Caco-2 (cell line): ENCODE measurements at regions of chr7 and their contacts with region 1.

Region 1: GRCh38 chr7:83936056-83936708 is 258.4 kb downstream of the SEMA3A start:
- DNase-seq: peak; percentile 68 to 76
- H3K4me3 ChIP-seq: no peak overlapping the region
- H3K4me3 Mint-ChIP-seq: no peak overlapping the region
- H3K27ac Mint-ChIP-seq: no peak overlapping the region
- H3K4me1 ChIP-seq: 0 out of 2 replicates have a peak, but pooled peaks cover 4% of the 10 kb centered on the region
- H3K4me1 Mint-ChIP-seq: peaks cover 10% of the 10 kb centered on the region
- H3K27me3 ChIP-seq: no peaks in the 10 kb centered on the region
- H3K27me3 Mint-ChIP-seq: no peaks in the 10 kb centered on the region
- CTCF ChIP-seq: peak; percentile 85 to 94

Region 2: DNA sequence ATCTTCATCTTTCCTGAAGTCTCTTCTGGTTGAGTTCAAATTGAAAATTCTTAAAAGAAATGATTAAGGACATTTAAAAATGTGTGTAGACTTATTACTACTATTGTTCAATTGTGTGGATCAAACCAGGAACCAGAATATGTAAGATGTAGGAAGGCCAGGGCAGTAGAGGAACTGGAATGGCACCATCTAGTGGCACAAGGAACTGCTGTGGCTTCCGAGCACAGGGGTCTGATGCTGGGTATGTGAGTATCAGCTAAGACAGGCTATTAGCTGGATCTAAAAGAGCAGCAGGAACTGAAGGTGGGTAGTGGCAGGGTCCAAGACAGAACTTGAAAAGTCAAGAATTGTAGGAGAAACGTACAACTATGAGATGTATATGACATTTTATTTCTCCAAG is 11.1 kb after region 1 on chr7:
- CTCF ChIA-PET with region 1: no interaction called
- POLR2A ChIA-PET with region 1: no interaction called
- intact Hi-C with region 1: loop called (anchors 1 kb)
- DNase-seq: peak; percentile 46 to 57
- H3K4me3 ChIP-seq: no peak overlapping the region
- H3K4me3 Mint-ChIP-seq: no peak overlapping the region
- H3K27ac Mint-ChIP-seq: no peak overlapping the region
- H3K4me1 ChIP-seq: 0 out of 2 replicates have a peak, but pooled peaks cover 3% of the 10 kb centered on the region
- H3K4me1 Mint-ChIP-seq: no peaks in the 10 kb centered on the region
- H3K27me3 ChIP-seq: no peaks in the 10 kb centered on the region
- H3K27me3 Mint-ChIP-seq: no peaks in the 10 kb centered on the region
- CTCF ChIP-seq: peak in 1 of 2 experiments; percentile 63

Region 3: GRCh38 chr7:83964318-83964717 is 28.1 kb after region 1 on chr7:
- CTCF ChIA-PET with region 1: no interaction called
- POLR2A ChIA-PET with region 1: no interaction called
- intact Hi-C with region 1: no loop called
- DNase-seq: no peak
- H3K4me3 ChIP-seq: no peak overlapping the region
- H3K4me3 Mint-ChIP-seq: no peak overlapping the region
- H3K27ac Mint-ChIP-seq: no peak overlapping the region
- H3K4me1 ChIP-seq: no peaks in the 10 kb centered on the region
- H3K4me1 Mint-ChIP-seq: no peaks in the 10 kb centered on the region
- H3K27me3 ChIP-seq: no peaks in the 10 kb centered on the region
- H3K27me3 Mint-ChIP-seq: no peaks in the 10 kb centered on the region
- CTCF ChIP-seq: no peak

Region 4: DNA sequence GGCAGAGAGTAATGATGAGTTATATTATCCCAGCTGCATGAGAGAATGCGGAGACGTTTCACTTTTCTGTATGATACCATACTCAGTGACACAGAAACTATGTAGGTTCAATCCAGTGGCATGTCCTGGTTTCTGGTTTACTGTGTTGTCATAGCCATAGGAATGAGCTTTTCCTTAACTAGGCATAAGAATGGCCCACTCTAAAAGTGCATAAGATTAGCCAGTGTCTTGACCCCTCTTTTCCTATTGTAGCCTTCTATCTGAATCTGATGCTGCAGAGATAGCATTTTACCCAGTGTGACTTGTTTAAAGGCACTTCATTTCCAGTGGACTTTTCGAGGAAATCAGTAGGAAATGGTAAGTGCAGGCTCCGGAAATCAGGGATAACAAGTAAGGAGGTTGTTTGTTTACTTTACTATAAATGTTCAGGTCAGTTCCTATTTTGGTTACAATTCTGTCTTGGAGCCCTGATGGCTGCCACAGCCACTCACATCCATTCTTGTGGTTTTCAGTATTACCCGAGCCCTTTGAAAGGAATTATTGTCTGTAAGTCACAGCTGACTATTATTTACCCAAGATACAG is 187.9 kb after region 1 on chr7:
- CTCF ChIA-PET with region 1: no interaction called
- POLR2A ChIA-PET with region 1: no interaction called
- intact Hi-C with region 1: no loop called
- DNase-seq: no peak
- H3K4me3 ChIP-seq: no peak overlapping the region
- H3K4me3 Mint-ChIP-seq: no peak overlapping the region
- H3K27ac Mint-ChIP-seq: no peak overlapping the region
- H3K4me1 ChIP-seq: peaks cover 9% of the 10 kb centered on the region
- H3K4me1 Mint-ChIP-seq: peaks cover 11% of the 10 kb centered on the region
- H3K27me3 ChIP-seq: no peaks in the 10 kb centered on the region
- H3K27me3 Mint-ChIP-seq: no peaks in the 10 kb centered on the region
- CTCF ChIP-seq: no peak

Region 5: GRCh38 chr7:84188786-84189405 is 252.7 kb after region 1 on chr7:
- CTCF ChIA-PET with region 1: interaction called, 4 read pairs
- POLR2A ChIA-PET with region 1: no interaction called
- intact Hi-C with region 1: loop called (anchors 2 kb)
- DNase-seq: peak in 1 of 2 experiments; percentile 13
- H3K4me3 ChIP-seq: no peak overlapping the region
- H3K4me3 Mint-ChIP-seq: no peak overlapping the region
- H3K27ac Mint-ChIP-seq: no peak overlapping the region
- H3K4me1 ChIP-seq: peaks cover 35% of the 10 kb centered on the region
- H3K4me1 Mint-ChIP-seq: peaks cover 29% of the 10 kb centered on the region
- H3K27me3 ChIP-seq: no peaks in the 10 kb centered on the region
- H3K27me3 Mint-ChIP-seq: no peaks in the 10 kb centered on the region
- CTCF ChIP-seq: peak; percentile 54 to 56

Region 6: DNA sequence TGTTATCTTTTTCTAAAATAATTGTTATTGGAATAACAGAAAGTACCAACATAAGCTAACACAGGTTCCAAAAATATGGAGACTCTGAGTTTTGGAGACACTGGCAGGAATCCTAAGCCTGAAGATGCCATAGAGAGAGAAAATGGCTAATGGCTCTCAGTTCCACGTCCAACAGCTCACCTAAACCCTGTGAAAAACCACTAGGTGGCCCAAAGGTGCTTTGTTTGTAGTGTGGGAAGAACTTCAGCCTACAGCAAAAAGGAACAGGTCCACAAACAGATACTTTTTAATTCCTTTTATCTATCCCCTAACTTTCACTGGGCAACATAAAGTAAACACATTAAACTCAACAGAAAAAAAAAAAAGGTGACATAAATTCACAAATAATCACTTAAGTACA is 978.4 kb after region 1 on chr7:
- CTCF ChIA-PET with region 1: no interaction called
- POLR2A ChIA-PET with region 1: no interaction called
- intact Hi-C with region 1: loop called (anchors 5 kb)
- DNase-seq: peak in 1 of 2 experiments; percentile 45
- H3K4me3 ChIP-seq: no peak overlapping the region
- H3K4me3 Mint-ChIP-seq: no peak overlapping the region
- H3K27ac Mint-ChIP-seq: no peak overlapping the region
- H3K4me1 ChIP-seq: peaks cover 30% of the 10 kb centered on the region
- H3K4me1 Mint-ChIP-seq: peaks cover 22% of the 10 kb centered on the region
- H3K27me3 ChIP-seq: no peaks in the 10 kb centered on the region
- H3K27me3 Mint-ChIP-seq: no peaks in the 10 kb centered on the region
- CTCF ChIP-seq: peak; percentile 26 to 29

Region 7: DNA sequence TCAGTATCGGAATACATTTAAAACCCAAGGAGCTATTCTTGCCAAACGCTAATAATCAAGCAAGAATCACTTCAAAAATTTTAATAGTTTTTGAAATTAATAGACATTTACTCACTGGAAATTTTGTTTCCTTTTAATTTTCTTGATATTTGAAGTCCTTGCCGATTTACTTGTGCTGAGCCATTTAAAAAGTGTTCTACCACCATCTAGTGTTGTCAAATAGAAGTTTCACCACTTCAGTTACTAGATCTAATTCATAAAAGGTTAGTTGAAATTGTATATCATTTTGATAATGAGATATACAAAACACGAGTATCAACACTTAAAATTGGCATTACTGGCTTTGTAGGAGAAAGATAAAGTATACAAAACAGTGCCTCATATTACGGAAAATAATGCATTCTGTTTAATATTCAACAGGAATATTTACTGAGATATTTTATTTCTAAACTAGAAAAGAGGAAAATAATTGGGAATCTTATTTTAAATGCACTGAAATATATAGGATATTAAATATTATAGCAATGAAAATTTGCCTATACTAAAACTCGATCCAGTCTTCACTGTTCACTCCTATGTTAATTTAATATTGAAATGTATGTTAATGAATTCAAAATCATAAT is 1915.5 kb after region 1 on chr7:
- CTCF ChIA-PET with region 1: no interaction called
- POLR2A ChIA-PET with region 1: no interaction called
- intact Hi-C with region 1: loop called (anchors 10 kb)
- DNase-seq: peak in 1 of 2 experiments; percentile 17
- H3K4me3 ChIP-seq: no peak overlapping the region
- H3K4me3 Mint-ChIP-seq: no peak overlapping the region
- H3K27ac Mint-ChIP-seq: no peak overlapping the region
- H3K4me1 ChIP-seq: no peaks in the 10 kb centered on the region
- H3K4me1 Mint-ChIP-seq: no peaks in the 10 kb centered on the region
- H3K27me3 ChIP-seq: no peaks in the 10 kb centered on the region
- H3K27me3 Mint-ChIP-seq: peaks cover 8% of the 10 kb centered on the region
- CTCF ChIP-seq: peak; percentile 32 to 36